Naive thymus-derived CD4-positive, alpha-beta T cell (primary cell): ENCODE measurements at regions of chr3 and their contacts with region 1.

Region 1: DNA sequence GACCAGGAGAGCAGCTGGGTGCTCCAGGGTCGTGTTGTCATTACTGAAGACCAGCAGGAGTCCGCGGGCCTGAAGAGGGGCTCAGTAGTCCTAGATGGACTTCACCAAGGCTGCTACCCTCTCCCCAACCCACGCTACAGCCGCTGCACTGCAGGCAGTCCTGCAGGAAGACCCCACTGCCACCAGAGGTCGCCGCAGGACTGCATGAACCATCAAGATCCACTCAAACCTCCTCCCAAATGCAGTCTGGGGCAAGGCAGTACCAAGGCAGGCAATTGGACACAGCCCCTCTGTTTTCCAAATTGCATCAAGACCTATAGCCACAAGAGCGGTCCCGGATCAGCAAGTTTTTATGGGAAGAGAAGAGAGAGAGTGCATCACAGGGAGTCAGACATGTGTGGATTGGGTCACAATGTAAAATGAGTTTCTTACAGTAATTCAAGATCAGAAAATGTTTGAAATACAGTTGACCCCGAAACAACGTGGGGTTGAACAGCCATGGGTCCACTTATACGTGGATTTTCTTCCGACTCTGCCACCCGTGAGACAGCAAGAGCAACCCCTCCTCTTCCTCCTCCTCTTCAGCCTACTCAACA is 46.7 kb downstream of the DZIP1L start:
- DNase-seq: peak; percentile 36 to 78 (median 55)
- ATAC-seq: peak; percentile 85
- H3K4me3 ChIP-seq: no peak overlapping the region
- H3K4me3 Mint-ChIP-seq: no peak overlapping the region
- H3K27ac ChIP-seq: no peak overlapping the region
- H3K27ac Mint-ChIP-seq: no peak overlapping the region
- H3K4me1 ChIP-seq: no peaks in the 10 kb centered on the region
- H3K4me1 Mint-ChIP-seq: peaks cover 0 to 8% (median 0%) of the 10 kb centered on the region in 7 donors
- H3K27me3 ChIP-seq: no peaks in the 10 kb centered on the region
- H3K27me3 Mint-ChIP-seq: peaks cover 6 to 15% (median 12%) of the 10 kb centered on the region in 5 donors

Region 2: GRCh38 chr3:138426226-138426625 is 357.5 kb after region 1 on chr3:
- CTCF ChIA-PET with region 1: no interaction called
- POLR2A ChIA-PET with region 1: no interaction called
- intact Hi-C with region 1: loop called in 1 of 2 experiments (anchors 2 kb)
- DNase-seq: no peak
- ATAC-seq: no peak
- H3K4me3 ChIP-seq: no peak overlapping the region
- H3K4me3 Mint-ChIP-seq: no peak overlapping the region
- H3K27ac ChIP-seq: no peak overlapping the region
- H3K27ac Mint-ChIP-seq: no peak overlapping the region
- H3K4me1 ChIP-seq: no peaks in the 10 kb centered on the region
- H3K4me1 Mint-ChIP-seq: no peaks in the 10 kb centered on the region
- H3K27me3 ChIP-seq: no peaks in the 10 kb centered on the region
- H3K27me3 Mint-ChIP-seq: peaks cover 2 to 17% (median 8%) of the 10 kb centered on the region in 5 donors